ENCODE measurements at regions of chr15 and their contacts with region 1.

Region 1: GRCh38 chr15:92391640-92392039 is 2.0 kb upstream of the ST8SIA2 start:
- DNase-seq: peak in 1 of 2 experiments; percentile 60
- H3K4me3 ChIP-seq: peak overlapping the region in 1 of 4 experiments; percentile 79; a peak in 1 of 8 replicates
- H3K27ac ChIP-seq: no peak overlapping the region
- H3K4me1 ChIP-seq: peaks cover 3 to 17% (median 5%) of the 10 kb centered on the region in 4 experiments
- H3K27me3 ChIP-seq: peaks cover 9 to 39% (median 35%) of the 10 kb centered on the region in 4 experiments
- CTCF ChIP-seq: peak; percentile 45 to 82 (median 80)
- EP300 ChIP-seq: no peak
- POLR2A ChIP-seq: no peak
- RAD21 ChIP-seq: peak; percentile 61 to 74

Region 2: DNA sequence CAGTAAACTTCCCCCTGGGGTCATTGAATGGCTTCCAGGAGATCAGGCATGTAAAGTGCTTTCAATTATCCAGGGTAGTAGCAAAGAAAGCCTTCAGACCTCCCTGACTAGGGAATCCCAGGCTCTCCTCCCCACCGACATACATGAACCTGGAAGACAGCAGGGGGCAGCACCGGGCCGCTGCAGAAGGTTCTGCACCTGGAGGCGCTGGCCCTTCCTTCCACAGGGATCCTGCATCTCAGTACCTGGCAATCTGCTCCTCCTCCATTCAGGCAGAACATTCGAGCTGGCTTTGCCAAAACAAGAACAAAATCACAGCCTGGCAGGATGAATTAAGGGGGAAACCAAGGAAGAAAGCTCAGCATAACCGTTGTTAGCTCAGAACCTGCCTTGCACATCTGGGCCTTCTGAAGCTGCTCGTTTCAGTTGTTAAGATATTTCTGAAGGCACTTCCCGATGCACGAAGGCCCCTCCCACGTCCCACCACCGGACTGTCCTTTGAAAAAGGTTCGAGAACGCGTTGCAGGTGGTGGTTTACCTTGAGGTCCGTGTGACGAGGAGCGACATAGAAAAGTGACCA is 300.4 kb before region 1 on chr15:
- CTCF ChIA-PET with region 1: interaction called, 12 read pairs
- POLR2A ChIA-PET with region 1: no interaction called
- DNase-seq: peak in 1 of 2 experiments; percentile 94
- H3K4me3 ChIP-seq: no peak overlapping the region
- H3K27ac ChIP-seq: no peak overlapping the region
- H3K4me1 ChIP-seq: peaks cover 0 to 3% (median 0%) of the 10 kb centered on the region in 4 experiments; a peak in 2 of 7 replicates
- H3K27me3 ChIP-seq: no peaks in the 10 kb centered on the region
- CTCF ChIP-seq: peak; percentile 78 to 91 (median 85)
- EP300 ChIP-seq: no peak
- POLR2A ChIP-seq: no peak
- RAD21 ChIP-seq: peak; percentile 87 to 91

Region 3: DNA sequence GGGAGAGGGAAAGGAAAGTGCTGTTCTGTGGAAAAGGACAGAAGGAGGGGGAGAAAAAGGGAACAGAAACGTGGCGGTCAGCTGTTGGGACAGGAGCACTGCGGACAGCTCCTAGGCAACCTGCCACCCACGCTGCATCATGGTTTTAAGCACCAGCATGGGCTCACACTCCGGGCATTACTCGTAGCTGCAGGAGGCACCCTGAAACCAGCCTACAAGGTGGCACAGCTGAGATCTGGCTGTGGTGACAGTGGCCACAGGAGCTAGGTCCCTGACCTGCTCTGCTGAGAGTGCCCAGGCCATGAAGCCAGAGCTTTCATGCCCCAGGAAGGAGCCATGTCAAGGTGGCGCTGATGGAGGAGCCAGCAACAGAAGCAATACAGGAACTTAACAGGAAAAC is 159.3 kb before region 1 on chr15:
- CTCF ChIA-PET with region 1: no interaction called
- POLR2A ChIA-PET with region 1: no interaction called
- DNase-seq: no peak
- H3K4me3 ChIP-seq: no peak overlapping the region
- H3K27ac ChIP-seq: no peak overlapping the region
- H3K4me1 ChIP-seq: no peaks in the 10 kb centered on the region; a peak in 1 of 7 replicates
- H3K27me3 ChIP-seq: no peaks in the 10 kb centered on the region
- CTCF ChIP-seq: no peak
- EP300 ChIP-seq: no peak
- POLR2A ChIP-seq: no peak
- RAD21 ChIP-seq: no peak

Region 4: DNA sequence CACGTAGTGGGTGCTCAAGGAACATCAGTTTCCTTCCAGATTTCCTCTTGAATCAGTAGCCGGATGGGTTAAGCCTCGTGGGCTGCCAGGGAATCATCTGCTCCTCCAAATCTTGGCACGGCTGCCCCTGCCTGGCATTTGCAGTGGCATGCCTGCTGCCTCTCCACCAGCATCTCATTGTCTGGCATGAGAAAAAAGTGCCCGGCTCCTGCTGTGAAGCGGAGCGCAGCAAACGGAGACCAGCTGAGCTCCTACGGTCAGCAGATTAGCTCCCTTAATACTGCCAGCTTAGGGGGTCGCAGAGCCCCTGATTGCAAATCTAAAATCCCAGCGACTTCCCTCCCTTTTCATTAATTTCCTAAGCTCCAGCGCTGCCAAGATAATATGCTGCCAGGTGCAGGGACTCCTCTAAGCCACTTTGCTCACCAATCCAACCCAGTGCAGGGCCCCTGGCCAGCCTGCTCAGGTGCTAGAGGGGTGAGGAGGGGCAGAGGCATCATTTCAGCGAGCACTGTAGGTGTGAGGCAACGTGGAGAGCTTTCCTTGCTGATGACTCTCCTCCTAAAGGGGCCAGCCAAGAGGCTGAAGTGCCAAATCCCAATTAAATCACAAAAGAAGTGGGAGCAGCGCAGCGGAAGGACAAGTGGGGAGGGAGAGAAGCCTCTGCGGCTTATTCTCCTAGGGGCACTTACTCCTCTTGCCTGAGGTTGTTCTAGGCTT is 47.6 kb before region 1 on chr15:
- CTCF ChIA-PET with region 1: no interaction called
- POLR2A ChIA-PET with region 1: no interaction called
- DNase-seq: peak; percentile 23 to 49
- H3K4me3 ChIP-seq: peak overlapping the region in 1 of 4 experiments; percentile 33; a peak in 1 of 8 replicates
- H3K27ac ChIP-seq: no peak overlapping the region
- H3K4me1 ChIP-seq: peaks cover 11 to 25% (median 16%) of the 10 kb centered on the region in 4 experiments
- H3K27me3 ChIP-seq: peaks cover 0 to 9% (median 3%) of the 10 kb centered on the region in 4 experiments; a peak in 4 of 7 replicates
- CTCF ChIP-seq: no peak
- EP300 ChIP-seq: no peak
- POLR2A ChIP-seq: no peak
- RAD21 ChIP-seq: no peak

Region 5: DNA sequence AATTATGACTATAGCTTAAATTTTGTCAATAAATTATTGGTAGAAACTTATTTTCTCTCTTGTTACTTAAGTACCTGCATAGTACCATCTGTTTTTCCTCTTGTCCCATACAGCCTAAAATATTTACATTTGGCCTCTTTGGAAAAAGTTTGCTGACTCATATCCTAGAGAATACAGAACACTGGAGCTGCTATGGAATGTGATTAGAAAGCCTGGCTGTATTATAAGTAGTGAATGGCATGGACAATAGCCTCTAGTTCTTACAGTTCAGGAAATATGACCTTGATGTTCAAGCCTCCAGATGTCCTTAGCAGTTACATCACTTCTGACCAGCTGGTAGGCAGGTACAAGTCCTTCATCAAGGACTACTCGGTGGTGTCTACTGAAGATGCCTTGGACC is 30.3 kb after region 1 on chr15:
- CTCF ChIA-PET with region 1: interaction called, 11 read pairs
- POLR2A ChIA-PET with region 1: no interaction called
- DNase-seq: no peak
- H3K4me3 ChIP-seq: no peak overlapping the region
- H3K27ac ChIP-seq: no peak overlapping the region
- H3K4me1 ChIP-seq: peaks cover 0 to 4% (median 0%) of the 10 kb centered on the region in 4 experiments; a peak in 4 of 7 replicates
- H3K27me3 ChIP-seq: no peaks in the 10 kb centered on the region
- CTCF ChIP-seq: no peak
- EP300 ChIP-seq: no peak
- POLR2A ChIP-seq: no peak
- RAD21 ChIP-seq: no peak

Region 6: DNA sequence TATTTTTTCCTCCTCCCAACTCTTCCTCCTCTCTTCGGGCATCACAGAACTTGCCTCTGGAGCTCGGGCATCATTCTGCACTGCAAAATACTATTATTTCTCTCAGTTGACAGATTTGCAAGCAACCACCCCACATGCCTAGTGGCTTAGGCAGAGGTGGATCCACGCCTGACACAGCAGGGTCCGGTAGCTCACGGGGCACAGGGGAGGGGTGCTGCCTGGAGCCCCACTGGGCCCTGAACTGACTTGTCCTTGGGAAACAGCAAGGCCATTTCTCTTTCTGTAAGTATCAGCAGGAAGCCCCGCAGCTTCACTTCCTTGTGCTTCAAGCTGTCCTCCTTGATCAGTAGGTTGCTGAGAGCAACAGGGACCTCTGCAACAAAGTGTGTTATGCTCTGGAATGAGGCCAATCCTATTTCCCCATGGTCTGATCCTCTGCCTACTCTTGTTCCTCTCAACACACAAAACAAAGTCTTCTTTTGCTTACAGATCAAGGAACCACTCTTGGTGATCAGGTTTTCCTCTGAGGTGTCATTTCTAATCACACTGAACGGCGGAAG is 194.8 kb after region 1 on chr15:
- CTCF ChIA-PET with region 1: no interaction called
- POLR2A ChIA-PET with region 1: no interaction called
- DNase-seq: no peak
- H3K4me3 ChIP-seq: no peak overlapping the region
- H3K27ac ChIP-seq: no peak overlapping the region
- H3K4me1 ChIP-seq: no peaks in the 10 kb centered on the region
- H3K27me3 ChIP-seq: no peaks in the 10 kb centered on the region
- CTCF ChIP-seq: no peak
- EP300 ChIP-seq: no peak
- POLR2A ChIP-seq: no peak
- RAD21 ChIP-seq: no peak